Prostate gland (tissue), 2 donors: ENCODE measurements at regions of chr2 and their contacts with region 1.

Region 1: GRCh38 chr2:217248312-217248935 is 388.6 kb upstream of the TNP1 start:
- DNase-seq: peak; percentile 57
- H3K4me3 ChIP-seq: no peak overlapping the region
- H3K27ac ChIP-seq: peak overlapping the region; percentile 61 to 81
- H3K4me1 ChIP-seq: peaks cover 8% of the 10 kb centered on the region
- H3K27me3 ChIP-seq: no peaks in the 10 kb centered on the region
- CTCF ChIP-seq: no peak
- POLR2A ChIP-seq: no peak

Region 2: DNA sequence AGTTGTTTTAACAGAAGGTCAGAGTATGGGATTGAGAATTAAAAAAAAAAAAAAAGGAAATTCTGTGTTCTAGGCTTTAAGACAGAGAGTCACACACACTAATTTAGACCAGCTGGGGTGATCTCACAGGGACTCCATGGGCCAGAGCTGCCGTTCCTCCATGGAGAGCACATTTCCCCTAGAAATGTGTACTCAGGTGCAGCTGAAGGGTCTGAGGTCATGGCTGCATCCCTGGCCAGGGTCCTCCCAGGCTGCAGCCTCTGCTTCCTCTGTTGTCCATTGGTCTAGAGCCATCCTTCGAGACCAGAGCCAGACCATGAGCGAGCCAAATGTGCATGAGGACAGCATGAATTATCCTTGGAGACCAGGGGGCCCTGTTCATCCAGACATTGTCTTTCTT is 198.5 kb before region 1 on chr2:
- intact Hi-C with region 1: no loop called
- DNase-seq: no peak
- H3K4me3 ChIP-seq: no peak overlapping the region
- H3K27ac ChIP-seq: no peak overlapping the region
- H3K4me1 ChIP-seq: no peaks in the 10 kb centered on the region
- H3K27me3 ChIP-seq: no peaks in the 10 kb centered on the region
- CTCF ChIP-seq: no peak
- POLR2A ChIP-seq: no peak

Region 3: GRCh38 chr2:217186668-217187159 is 61.7 kb before region 1 on chr2:
- intact Hi-C with region 1: loop called (anchors 5 kb)
- DNase-seq: no peak
- H3K4me3 ChIP-seq: no peak overlapping the region
- H3K27ac ChIP-seq: no peak overlapping the region
- H3K4me1 ChIP-seq: no peaks in the 10 kb centered on the region
- H3K27me3 ChIP-seq: no peaks in the 10 kb centered on the region
- CTCF ChIP-seq: no peak
- POLR2A ChIP-seq: no peak

Region 4: GRCh38 chr2:217360781-217361482 is 112.5 kb after region 1 on chr2:
- intact Hi-C with region 1: loop called (anchors 5 kb)
- DNase-seq: peak; percentile 21
- H3K4me3 ChIP-seq: no peak overlapping the region
- H3K27ac ChIP-seq: peak overlapping the region; percentile 29 to 56
- H3K4me1 ChIP-seq: peaks cover 3% of the 10 kb centered on the region
- H3K27me3 ChIP-seq: no peaks in the 10 kb centered on the region
- CTCF ChIP-seq: no peak
- POLR2A ChIP-seq: no peak

Region 5: DNA sequence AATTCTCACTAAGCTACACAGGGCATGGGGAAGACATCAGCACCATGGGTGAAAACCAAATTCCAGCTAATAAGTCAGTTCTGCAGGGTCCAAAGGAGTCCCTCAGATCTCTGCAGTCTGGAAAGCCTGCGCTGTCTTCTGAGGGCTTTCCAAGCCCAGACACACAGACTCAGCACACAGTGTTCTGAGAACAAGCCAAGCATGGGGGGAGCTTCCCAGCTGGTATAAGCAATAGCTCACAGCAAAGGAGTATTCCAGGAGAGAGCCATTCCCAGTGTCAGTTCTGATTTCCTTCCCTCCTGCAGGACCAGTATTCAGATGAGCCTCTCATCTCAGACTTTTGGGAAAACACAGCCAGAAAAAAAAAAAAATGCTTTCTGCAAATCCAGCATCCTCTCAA is 383.6 kb after region 1 on chr2:
- intact Hi-C with region 1: loop called (anchors 10 kb)
- DNase-seq: no peak
- H3K4me3 ChIP-seq: no peak overlapping the region
- H3K27ac ChIP-seq: peak overlapping the region; percentile 17 to 52
- H3K4me1 ChIP-seq: no peaks in the 10 kb centered on the region
- H3K27me3 ChIP-seq: no peaks in the 10 kb centered on the region
- CTCF ChIP-seq: no peak
- POLR2A ChIP-seq: no peak

Region 6: GRCh38 chr2:217743966-217744761 is 495.7 kb after region 1 on chr2:
- intact Hi-C with region 1: loop called (anchors 10 kb)
- DNase-seq: peak; percentile 0
- H3K4me3 ChIP-seq: no peak overlapping the region
- H3K27ac ChIP-seq: no peak overlapping the region
- H3K4me1 ChIP-seq: no peaks in the 10 kb centered on the region
- H3K27me3 ChIP-seq: no peaks in the 10 kb centered on the region
- CTCF ChIP-seq: no peak
- POLR2A ChIP-seq: no peak

Region 7: DNA sequence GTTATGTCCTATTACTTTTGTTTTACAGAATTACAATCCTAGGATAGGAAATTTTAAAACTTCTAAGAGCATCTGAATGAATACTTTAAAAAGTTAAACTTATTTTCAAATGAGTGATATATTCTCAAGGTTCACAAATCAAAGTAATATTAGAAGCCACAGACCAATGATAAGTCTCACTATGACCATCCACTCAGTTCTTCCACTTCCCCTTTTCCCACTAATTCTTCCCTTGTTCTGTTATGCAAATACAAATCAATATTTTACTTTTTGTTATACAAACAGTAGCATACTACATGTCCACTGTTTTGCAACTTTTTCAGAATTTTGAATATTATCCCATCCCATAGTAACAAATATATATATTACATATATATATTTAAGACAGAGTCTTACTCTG is 1299.6 kb after region 1 on chr2:
- intact Hi-C with region 1: no loop called
- DNase-seq: no peak
- H3K4me3 ChIP-seq: no peak overlapping the region
- H3K27ac ChIP-seq: no peak overlapping the region
- H3K4me1 ChIP-seq: no peaks in the 10 kb centered on the region
- H3K27me3 ChIP-seq: no peaks in the 10 kb centered on the region
- CTCF ChIP-seq: no peak
- POLR2A ChIP-seq: no peak